ENCODE measurements at regions of chr13 and their contacts with region 1.

Region 1: GRCh38 chr13:39602614-39603366 is at the start of gene LHFPL6:
- DNase-seq: peak; percentile 91
- H3K4me3 Mint-ChIP-seq: peak within 1 kb of the TSS; percentile 86
- H3K27ac Mint-ChIP-seq: peak within 1 kb of the TSS; percentile 49
- H3K4me1 Mint-ChIP-seq: peaks cover 14% of the 10 kb centered on the region
- H3K27me3 Mint-ChIP-seq: peaks cover 65% of the 10 kb centered on the region
- total RNA-seq, gene LHFPL6: 4.8 TPM in 2 replicates

Region 2: GRCh38 chr13:39623466-39623865 is 20.7 kb after region 1 on chr13:
- intact Hi-C with region 1: no loop called
- DNase-seq: no peak
- H3K4me3 Mint-ChIP-seq: no peak overlapping the region
- H3K27ac Mint-ChIP-seq: no peak overlapping the region
- H3K4me1 Mint-ChIP-seq: no peaks in the 10 kb centered on the region
- H3K27me3 Mint-ChIP-seq: peaks cover 28% of the 10 kb centered on the region

Region 3: DNA sequence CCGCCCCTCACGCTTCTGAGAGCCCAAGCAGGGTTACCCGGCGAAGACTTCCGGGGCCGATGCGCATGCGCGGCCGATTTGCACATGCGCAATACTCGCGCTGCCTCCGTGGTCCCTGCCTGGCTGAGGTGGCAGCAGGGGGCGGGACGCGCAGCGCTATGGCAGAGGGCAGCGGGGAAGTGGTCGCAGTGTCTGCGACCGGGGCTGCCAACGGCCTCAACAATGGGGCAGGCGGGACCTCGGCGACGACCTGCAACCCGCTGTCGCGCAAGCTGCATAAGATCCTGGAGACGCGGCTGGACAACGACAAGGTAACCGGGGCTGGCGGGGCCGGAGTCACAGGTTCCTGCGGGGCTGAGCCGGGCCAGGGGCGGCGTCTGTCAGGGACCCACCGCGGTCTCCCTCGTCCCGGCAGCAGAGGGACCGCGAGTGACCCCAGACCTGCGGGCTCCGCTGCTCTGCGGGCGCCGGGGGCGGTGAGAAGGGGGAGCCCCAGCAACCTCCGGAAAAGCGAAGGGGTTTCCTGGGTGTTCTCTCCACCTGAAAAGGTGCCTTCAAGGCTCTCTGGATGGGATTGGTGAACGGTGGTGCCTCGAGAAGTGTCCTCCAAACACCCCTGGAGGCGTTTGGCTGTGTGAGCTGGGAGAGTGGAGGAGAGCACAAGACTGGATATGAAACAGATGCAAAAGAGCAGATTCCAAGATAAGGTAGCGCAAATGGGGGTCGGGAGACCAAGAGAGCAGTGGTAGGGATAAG is 53.0 kb after region 1 on chr13 and contains the start of gene COG6:
- intact Hi-C with region 1: loop called (anchors 5 kb)
- DNase-seq: peak; percentile 99
- H3K4me3 Mint-ChIP-seq: peak within 1 kb of the TSS; percentile 92
- H3K27ac Mint-ChIP-seq: peak within 1 kb of the TSS; percentile 92
- H3K4me1 Mint-ChIP-seq: peaks cover 21% of the 10 kb centered on the region
- H3K27me3 Mint-ChIP-seq: peaks cover 11% of the 10 kb centered on the region
- total RNA-seq, gene COG6: 24.3 and 30.3 TPM in 2 replicates

Region 4: GRCh38 chr13:39740783-39741182 is 138.0 kb after region 1 on chr13:
- intact Hi-C with region 1: no loop called
- DNase-seq: no peak
- H3K4me3 Mint-ChIP-seq: no peak overlapping the region
- H3K27ac Mint-ChIP-seq: no peak overlapping the region
- H3K4me1 Mint-ChIP-seq: no peaks in the 10 kb centered on the region
- H3K27me3 Mint-ChIP-seq: no peaks in the 10 kb centered on the region

Region 5: DNA sequence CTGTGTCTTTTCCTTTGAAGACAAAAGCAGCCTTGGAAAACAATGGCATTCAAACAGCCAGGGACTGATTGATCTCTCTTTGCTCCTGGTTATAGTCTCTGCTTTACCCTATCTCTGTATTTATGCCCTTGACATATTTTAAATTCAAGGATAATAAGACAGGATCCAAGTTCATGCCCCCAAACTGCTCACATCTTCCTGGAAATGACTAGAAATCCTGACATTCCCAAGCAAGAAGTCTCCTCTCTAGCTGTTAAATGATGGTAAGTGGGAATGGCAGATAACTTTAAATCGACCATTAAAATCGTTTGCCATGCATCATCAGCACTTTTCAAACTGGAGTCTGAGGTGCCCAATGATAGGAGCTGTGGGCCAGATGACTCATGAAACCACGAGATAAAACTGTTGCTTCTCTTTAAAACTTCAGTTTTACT is 628.1 kb after region 1 on chr13:
- intact Hi-C with region 1: no loop called
- DNase-seq: no peak
- H3K4me3 Mint-ChIP-seq: no peak overlapping the region
- H3K27ac Mint-ChIP-seq: no peak overlapping the region
- H3K4me1 Mint-ChIP-seq: peaks cover 12% of the 10 kb centered on the region
- H3K27me3 Mint-ChIP-seq: no peaks in the 10 kb centered on the region

Region 6: GRCh38 chr13:40247845-40248244 is 645.1 kb after region 1 on chr13:
- intact Hi-C with region 1: no loop called
- DNase-seq: no peak
- H3K4me3 Mint-ChIP-seq: no peak overlapping the region
- H3K27ac Mint-ChIP-seq: no peak overlapping the region
- H3K4me1 Mint-ChIP-seq: peaks cover 24% of the 10 kb centered on the region
- H3K27me3 Mint-ChIP-seq: no peaks in the 10 kb centered on the region

Measured in activated CD4-positive, alpha-beta T cell treated with anti-CD3 and anti-CD28 coated beads, Interleukin-2, amount 10 ng/mL, durations not matched to agents 24 days and 14 days (primary cell).